ENCODE measurements at regions of chr17 and their contacts with region 1.

Region 1: DNA sequence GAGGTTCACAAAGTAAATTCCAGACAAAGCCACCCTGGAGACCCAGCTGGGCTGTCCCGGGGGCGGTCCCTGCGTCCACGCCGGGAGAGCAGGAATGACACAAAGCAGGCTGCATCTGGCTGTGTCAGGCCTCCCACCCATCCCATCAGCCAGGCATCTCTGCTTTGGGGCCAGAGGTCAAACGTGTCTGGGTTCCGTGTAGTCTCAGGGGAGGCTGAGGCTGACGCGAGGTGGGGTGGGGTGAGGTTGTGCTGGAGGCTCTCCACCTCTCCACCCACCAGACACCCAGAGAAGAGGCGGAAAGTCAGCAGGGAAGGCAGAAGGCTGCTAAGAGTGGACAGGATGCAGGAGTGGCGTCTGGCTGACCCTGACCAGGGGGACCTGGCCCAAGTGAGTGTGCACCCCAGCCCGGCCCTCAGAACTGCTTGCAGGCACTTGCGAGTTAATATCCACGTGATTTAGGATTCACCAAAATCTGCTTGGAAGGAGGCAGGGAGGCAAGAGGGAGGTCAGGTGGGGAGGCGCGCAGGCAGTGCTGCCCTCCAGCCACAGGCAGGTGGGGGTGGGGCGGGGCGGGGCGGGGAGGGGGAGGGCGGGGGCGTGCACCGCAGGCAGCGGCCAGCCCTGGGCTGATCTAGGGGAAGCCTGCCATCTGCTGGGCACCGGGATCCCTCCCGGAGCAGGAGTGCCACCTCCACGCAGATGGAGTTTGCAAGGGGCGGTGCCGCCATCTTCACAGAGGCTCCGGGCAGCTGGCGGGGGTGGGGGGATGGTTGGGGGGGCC is 44.3 kb downstream of the TBC1D16 start:
- DNase-seq: peak; percentile 82 to 94 (median 93)
- ATAC-seq: peak; percentile 78 to 87
- H3K4me3 ChIP-seq: no peak overlapping the region
- H3K27ac ChIP-seq: no peak overlapping the region
- H3K4me1 ChIP-seq: peaks cover 17% of the 10 kb centered on the region
- H3K27me3 ChIP-seq: no peaks in the 10 kb centered on the region

Region 2: GRCh38 chr17:79741751-79742588 is 249.4 kb before region 1 on chr17:
- intact Hi-C with region 1: loop called in 2 of 4 experiments (anchors 2 to 10 kb)
- DNase-seq: peak; percentile 67 to 91 (median 90)
- ATAC-seq: peak; percentile 55 to 70
- H3K4me3 ChIP-seq: no peak overlapping the region
- H3K27ac ChIP-seq: no peak overlapping the region
- H3K4me1 ChIP-seq: no peaks in the 10 kb centered on the region
- H3K27me3 ChIP-seq: no peaks in the 10 kb centered on the region

Region 3: GRCh38 chr17:79747508-79748295 is 243.6 kb before region 1 on chr17:
- intact Hi-C with region 1: loop called in 2 of 4 experiments (anchors 2 to 10 kb)
- DNase-seq: peak in 1 of 3 donors; percentile 37
- ATAC-seq: peak in 1 of 2 donors; percentile 21
- H3K4me3 ChIP-seq: no peak overlapping the region
- H3K27ac ChIP-seq: no peak overlapping the region
- H3K4me1 ChIP-seq: no peaks in the 10 kb centered on the region
- H3K27me3 ChIP-seq: no peaks in the 10 kb centered on the region

Region 4: GRCh38 chr17:79789534-79790353 is 201.6 kb before region 1 on chr17:
- intact Hi-C with region 1: loop called in 3 of 4 experiments (anchors 5 to 10 kb)
- DNase-seq: peak; percentile 50 to 80 (median 79)
- ATAC-seq: peak; percentile 44 to 72
- H3K4me3 ChIP-seq: no peak overlapping the region
- H3K27ac ChIP-seq: no peak overlapping the region
- H3K4me1 ChIP-seq: no peaks in the 10 kb centered on the region
- H3K27me3 ChIP-seq: no peaks in the 10 kb centered on the region

Region 5: GRCh38 chr17:79808763-79809529 is 182.4 kb before region 1 on chr17:
- intact Hi-C with region 1: loop called in 1 of 4 experiments (anchors 10 kb)
- DNase-seq: peak; percentile 15 to 51 (median 39)
- ATAC-seq: peak; percentile 3 to 20
- H3K4me3 ChIP-seq: no peak overlapping the region
- H3K27ac ChIP-seq: no peak overlapping the region
- H3K4me1 ChIP-seq: peaks cover 5% of the 10 kb centered on the region
- H3K27me3 ChIP-seq: no peaks in the 10 kb centered on the region

Region 6: GRCh38 chr17:79821331-79822095 is 169.8 kb before region 1 on chr17:
- intact Hi-C with region 1: no loop called
- DNase-seq: peak in 1 of 3 donors; percentile 27
- ATAC-seq: no peak
- H3K4me3 ChIP-seq: no peak overlapping the region
- H3K27ac ChIP-seq: peak overlapping the region; percentile 90
- H3K4me1 ChIP-seq: peaks cover 8% of the 10 kb centered on the region
- H3K27me3 ChIP-seq: no peaks in the 10 kb centered on the region

Region 7: DNA sequence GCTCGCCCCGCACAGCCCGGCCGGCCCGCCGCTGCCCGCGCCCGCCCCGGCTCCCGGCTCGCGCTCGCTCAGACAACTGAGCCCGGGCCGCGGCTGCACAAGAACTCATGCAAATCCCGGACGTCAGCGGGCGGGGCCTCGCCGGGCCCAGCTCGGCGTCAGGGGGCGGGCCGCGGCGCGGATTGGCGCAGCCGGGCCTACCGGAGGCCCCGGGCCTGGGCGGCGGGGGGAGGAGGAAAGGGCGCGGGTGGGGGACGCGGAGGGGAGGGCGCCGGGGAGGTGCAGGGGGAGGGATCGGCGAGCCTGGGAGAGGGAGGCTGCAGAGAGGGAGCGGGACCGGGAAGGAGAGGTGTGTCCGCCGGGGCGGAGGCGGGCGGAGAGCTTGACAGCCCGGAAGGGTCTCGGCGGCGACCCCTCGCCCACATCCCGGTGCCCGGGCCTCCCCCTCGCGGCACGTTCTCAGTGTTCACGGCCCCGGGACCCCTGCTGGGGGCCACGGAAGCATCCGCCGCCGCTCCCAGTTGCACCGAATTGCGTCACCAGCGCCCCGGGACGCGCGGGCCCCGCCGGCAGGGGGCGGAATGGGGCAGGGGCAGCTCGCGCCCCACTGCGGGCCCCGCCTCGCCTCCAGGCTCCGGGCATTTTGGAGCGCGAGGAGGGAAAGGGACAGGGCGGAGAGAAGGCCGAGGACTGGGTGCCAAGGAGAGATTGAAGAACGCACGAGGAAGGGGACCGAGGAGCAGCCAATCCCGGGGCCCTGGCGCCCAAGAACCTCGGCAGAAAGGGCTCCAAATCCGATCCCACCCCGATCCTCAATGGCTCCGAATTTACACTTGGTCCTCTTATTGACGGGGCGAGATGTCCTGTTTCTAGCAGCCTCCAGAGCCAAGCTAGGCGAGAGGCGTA is 151.7 kb before region 1 on chr17 and contains the start of gene CBX4:
- intact Hi-C with region 1: loop called in 1 of 4 experiments (anchors 5 kb)
- DNase-seq: peak; percentile 96 to 99 (median 98)
- ATAC-seq: peak; percentile 84 to 87
- H3K4me3 ChIP-seq: peak within 1 kb of the TSS; percentile 90
- H3K27ac ChIP-seq: peak within 1 kb of the TSS; percentile 88
- H3K4me1 ChIP-seq: peaks cover 10% of the 10 kb centered on the region
- H3K27me3 ChIP-seq: no peaks in the 10 kb centered on the region
- total RNA-seq, gene CBX4: 26.9 to 32.6 (median 30.3) TPM

Region 8: DNA sequence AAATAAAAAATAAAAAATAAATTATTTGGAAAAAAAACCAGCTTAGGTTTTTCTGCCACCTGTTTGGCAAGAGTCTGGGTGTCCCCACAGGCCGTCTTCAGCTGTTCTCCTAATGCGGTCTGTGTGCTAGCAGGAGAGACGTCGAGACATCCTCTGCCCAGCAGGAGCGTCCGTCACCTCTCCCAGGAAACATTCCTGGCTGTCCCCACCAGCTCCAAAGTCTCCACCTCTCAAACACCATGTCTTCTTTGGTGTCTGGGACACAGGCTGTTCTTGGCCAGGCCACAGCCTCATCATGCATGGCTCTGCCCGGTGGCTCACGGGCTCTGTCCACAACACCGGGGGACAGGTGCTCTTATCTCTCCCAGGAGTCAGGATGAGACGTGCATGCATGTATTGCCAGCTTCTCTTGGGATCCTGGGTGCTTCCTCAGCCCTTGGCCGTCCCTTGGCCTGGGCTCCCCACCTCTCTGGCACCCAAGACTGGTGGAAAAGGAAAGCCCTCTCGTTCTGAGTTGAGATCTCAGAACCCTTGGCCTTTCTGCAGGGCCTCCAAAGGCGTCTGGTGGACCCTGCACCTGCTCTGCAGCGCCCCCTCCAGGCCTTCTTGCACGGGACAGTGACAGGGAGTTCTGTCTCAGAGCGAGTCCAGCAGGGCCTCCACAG is 67.2 kb before region 1 on chr17:
- intact Hi-C with region 1: loop called in 1 of 4 experiments (anchors 10 kb)
- DNase-seq: peak; percentile 2 to 72 (median 53)
- ATAC-seq: no peak
- H3K4me3 ChIP-seq: no peak overlapping the region
- H3K27ac ChIP-seq: no peak overlapping the region
- H3K4me1 ChIP-seq: no peaks in the 10 kb centered on the region
- H3K27me3 ChIP-seq: no peaks in the 10 kb centered on the region